Dorsolateral prefrontal cortex (tissue), 120 donors: ENCODE measurements at regions of chr21 and their contacts with region 1.

Region 1: DNA sequence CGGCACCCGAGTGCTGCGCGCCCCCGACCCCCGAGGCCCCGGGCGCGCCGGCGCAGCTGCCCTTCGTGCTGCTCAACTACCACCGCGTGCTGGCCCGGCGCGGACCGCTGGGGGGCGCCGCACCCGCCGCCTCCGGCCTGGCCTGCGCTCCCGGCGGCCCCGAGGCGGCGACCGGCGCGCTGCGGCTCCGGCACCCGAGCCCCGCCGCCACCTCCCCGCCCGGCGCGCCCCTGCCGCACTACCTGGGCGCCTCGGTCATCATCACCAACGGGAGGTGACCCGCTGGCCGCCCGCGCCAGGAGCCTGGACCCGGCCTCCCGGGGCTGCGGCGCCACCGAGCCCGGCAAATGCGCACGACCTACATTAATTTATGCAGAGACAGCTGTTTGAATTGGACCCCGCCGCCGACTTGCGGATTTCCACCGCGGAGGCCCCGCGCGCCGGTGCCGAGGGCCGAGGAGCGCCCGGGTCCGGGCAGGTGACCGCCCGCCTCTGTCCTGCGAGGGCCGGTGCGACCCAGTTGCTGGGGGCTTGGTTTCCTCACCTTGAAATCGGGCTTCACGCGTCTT is 49.0 kb downstream of the SIM2 start:
- DNase-seq: peak in 9 of 10 donors; percentile 42 to 80 (median 55)
- H3K4me3 ChIP-seq: peak overlapping the region; percentile 43 to 79 (median 66)
- H3K27ac ChIP-seq: peak overlapping the region in 20 of 59 donors; percentile 28 to 83 (median 60)
- H3K27me3 ChIP-seq: no peaks in the 10 kb centered on the region
- CTCF ChIP-seq: peak in 15 of 56 donors; percentile 1 to 36 (median 13)

Region 2: DNA sequence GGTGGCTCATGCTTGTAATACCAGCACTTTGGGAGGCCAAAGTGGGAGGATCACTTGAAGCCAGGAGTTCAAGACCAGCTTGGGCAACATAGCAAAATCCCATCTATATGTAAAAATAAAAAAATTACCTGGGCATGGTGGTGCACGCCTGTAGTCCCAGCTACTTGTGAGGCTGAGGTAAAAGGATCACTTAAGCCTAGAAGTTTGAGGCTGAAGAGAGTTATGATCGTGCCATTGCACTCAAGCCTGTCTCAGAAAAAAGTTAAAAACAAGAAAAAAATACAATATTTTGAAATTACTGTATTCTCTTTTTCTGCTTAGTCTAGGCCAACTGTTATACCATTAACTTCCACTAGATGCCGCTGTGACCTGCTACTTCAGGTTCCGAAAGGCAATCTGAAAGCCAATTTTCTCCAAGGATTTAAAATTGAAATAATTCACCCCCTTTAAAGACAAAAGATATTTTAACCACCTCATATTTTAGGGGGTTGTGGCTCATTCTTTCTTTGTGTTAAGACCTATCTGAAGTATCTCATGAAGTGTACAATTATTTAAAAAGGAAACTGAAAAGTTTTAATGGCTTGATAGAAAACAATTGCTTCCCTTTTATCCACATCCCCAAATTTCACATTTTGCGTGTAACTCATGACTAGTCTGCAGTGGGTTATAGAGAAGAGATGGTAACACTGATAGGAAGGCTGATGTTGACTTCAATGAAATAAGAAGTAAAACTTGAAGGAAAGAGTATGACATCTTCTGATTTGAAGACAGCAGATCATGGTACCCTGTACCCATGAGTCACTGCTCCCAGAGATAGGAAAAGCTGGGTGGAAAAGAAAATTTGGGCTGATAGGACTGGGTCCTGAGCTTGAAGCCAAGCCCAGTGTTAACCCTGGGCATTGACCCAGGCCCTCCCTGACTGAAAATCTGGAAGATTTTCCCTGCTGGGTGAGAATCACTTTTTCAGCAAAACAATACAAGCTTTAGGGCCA is 243.5 kb before region 1 on chr21:
- intact Hi-C with region 1: loop called in 1 of 2 experiments (anchors 10 kb)
- DNase-seq: peak in 2 of 10 donors; percentile 37 to 43
- H3K4me3 ChIP-seq: no peak overlapping the region
- H3K27ac ChIP-seq: no peak overlapping the region
- H3K27me3 ChIP-seq: peaks cover 0 to under 1% (median 0%) of the 10 kb centered on the region in 45 donors
- CTCF ChIP-seq: peak; percentile 83 to 99 (median 95)

Region 3: DNA sequence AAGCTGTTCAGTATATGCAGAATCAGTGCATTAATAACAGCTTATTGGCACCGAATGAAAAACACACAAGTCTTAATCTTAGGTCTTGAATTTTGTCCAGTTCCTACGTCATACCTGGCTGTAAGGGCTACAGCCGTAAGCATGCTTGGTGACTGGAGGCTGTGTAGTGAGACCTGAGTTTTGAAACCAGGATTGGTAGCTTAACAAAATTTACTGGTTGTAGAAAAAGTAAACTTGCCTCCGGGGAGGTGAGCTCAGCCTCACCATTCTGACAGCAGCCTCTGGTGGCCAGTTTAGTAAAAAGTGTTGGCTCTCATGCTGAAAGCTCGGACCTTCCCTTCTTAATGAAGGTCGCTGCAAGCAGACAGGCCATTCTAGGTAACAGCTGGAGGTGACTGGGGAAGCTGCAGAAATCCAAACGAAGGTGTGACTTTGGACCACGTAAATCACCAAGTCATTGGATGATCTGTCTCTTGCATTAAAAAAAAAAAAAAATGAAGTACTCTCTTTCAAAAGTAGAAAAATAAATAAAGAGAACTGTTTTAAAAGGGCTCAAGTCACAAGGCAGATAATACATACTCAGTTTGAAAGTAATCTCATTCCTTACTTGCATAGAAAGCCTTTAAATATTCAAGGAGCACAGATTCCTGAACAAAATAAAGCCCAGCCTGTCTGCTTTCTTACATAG is 169.7 kb after region 1 on chr21:
- intact Hi-C with region 1: loop called in 1 of 2 experiments (anchors 5 kb)
- DNase-seq: peak in 3 of 10 donors; percentile 22 to 43 (median 41)
- H3K4me3 ChIP-seq: peak overlapping the region in 1 of 59 donors; percentile 12
- H3K27ac ChIP-seq: no peak overlapping the region
- H3K27me3 ChIP-seq: no peaks in the 10 kb centered on the region
- CTCF ChIP-seq: peak; percentile 23 to 72 (median 56)